Astrocyte of the cerebellum (primary cell): ENCODE measurements at regions of chr13 and their contacts with region 1.

Region 1: GRCh38 chr13:112783135-112783977 is 93.5 kb downstream of the ATP11A start:
- DNase-seq: no peak
- H3K4me3 ChIP-seq: no peak overlapping the region
- CTCF ChIP-seq: no peak

Region 2: DNA sequence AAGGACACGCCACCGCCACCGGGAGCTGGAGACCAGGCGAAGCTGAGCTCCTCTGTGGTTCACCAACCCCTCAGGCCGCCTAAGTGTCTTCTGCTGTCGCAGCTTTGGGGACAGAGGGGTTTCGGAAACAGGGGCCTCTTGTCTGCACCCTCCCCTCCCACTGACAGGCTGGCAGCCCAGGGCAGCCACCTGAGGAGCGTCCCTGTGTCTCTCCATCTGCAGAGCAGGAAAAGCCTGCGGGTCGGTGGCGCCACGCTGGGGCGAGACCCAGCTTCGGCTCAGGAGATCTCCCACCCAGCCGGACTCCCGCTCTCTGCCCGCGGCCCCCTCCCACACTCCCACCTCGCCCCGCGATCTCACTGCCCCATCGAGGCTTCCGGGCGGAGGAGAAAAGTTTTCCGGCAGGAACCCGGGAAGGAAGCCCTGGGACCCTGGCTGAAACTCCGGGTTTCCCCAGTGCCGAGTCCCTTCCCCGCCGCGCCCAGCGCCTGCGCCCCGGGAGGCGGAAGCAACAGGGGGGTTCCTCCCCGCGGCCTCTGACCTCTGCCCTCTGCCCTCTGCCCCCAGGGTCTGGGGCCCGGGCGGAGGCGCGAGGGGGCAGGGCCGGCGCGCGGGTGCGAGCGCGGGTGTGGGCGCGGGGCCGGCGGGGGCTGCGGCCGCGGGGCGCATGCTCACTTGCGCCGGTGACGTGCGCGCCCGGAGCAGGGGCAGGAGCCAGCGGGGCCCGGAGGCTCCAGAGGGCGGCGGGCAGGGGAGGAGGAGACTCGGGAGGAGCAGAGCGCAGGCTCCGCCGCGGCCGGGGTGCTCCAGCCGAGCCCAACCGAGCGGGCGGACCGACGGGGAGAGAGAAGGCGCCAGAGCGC is 93.8 kb before region 1 on chr13 and contains the start of gene ATP11A:
- in situ Hi-C with region 1: loop called (anchors 5 kb)
- DNase-seq: peak; percentile 60
- H3K4me3 ChIP-seq: peak within 1 kb of the TSS; percentile 63
- CTCF ChIP-seq: no peak